Head of caudate nucleus (tissue), 42 donors: ENCODE measurements at regions of chr12 and their contacts with region 1.

Region 1: GRCh38 chr12:62603061-62603810 is 136.6 kb downstream of the MON2 start:
- DNase-seq: peak; percentile 67 to 95 (median 91)

Region 2: DNA sequence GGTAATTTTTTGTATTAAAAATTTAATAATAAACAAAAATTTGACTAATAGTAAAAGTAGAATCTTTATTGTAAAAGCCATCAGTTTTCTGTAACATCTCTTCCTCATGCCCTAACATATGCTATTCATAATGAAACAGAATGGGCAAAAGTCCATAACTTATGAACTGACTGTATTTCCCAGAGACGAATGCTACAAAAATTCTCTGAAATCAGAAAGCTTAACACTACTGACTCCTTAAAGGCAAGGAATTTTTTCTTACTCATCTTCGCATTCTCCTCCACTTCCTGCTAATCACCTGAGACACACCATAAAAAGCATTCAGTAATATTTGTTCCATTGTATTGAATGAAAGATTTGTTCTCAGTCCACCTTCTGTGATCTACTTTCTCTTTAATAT is 119.0 kb before region 1 on chr12:
- intact Hi-C with region 1: no loop called
- DNase-seq: no peak

Region 3: GRCh38 chr12:62714774-62715721 is 111.8 kb after region 1 on chr12:
- intact Hi-C with region 1: loop called (anchors 5 kb)
- DNase-seq: peak; percentile 18 to 86 (median 56)

Region 4: DNA sequence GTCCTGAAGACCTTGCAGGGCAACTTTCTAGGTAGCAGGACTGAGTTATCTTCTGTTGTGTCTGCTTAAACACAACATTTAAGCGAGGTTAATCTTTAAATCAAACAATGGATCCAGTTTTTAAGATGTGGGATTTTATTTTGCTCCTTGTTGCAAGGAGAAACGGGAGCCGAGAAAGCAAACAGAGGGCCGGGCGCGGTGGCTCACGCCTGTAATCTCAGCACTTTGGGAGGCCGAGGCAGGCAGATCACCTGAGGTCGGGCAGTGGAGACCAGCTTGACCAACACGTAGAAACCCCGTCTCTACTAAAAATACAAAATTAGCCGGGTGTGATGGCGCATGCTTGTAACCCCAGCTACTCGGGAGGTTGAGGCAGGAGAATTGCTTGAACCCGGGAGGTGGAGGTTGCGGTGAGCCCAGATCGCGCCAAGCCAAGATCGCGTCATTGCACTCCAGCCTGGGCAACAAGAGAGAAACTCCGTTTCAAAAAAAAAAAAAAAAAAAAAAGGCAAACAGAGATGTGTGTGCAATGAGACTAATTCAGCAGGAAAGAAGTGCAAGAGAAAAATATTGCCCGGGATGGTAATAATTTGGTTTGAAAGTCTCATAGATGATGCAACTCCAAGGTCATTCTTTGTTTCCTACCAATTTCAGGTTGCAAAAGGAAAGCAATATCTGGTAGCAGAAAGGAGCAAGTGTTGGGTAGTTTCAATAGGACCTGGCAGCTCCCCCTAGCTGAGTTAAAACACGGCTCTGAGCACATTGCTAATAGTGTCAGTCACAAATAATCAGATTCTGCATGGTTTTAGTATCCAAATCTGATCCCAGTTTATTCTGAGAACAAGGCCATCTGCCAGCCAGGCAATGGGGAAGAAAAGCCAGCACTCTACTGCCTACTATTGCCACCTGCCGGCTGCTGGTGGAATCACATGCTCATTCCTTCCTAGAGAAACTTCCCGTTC is 190.3 kb after region 1 on chr12:
- intact Hi-C with region 1: loop called (anchors 5 kb)
- DNase-seq: peak; percentile 73 to 97 (median 91)

Region 5: GRCh38 chr12:62934799-62935674 is 331.8 kb after region 1 on chr12 and contains the start of gene PPM1H:
- intact Hi-C with region 1: loop called (anchors 10 kb)
- DNase-seq: peak; percentile 73 to 93 (median 86)